ENCODE measurements at regions of chr13 and their contacts with region 1.

Region 1: DNA sequence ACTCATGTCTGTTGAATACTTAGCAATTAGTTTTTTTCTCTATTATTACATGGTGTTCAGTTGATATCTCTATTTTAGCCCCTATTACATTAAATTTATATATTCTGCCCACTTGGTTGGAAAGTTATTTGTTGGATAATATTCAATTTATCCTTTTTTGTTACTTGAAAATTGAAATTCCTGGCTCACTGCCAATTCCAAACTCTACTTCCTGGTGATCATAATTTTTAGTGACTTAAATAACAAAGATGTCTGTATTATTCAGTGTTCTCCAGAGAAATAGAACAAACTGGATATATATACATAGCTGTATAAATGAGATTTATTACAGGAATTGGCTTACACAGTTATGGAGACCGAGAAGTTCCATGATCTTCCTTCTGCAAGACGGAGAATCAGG is 93.6 kb downstream of the GPC5 start:
- DNase-seq: no peak
- ATAC-seq: no peak
- H3K4me3 ChIP-seq: no peak overlapping the region
- H3K27ac ChIP-seq: no peak overlapping the region
- H3K4me1 ChIP-seq: no peaks in the 10 kb centered on the region
- H3K27me3 ChIP-seq: no peaks in the 10 kb centered on the region
- CTCF ChIP-seq: no peak
- EP300 ChIP-seq: no peak
- POLR2A ChIP-seq: no peak
- RAD21 ChIP-seq: no peak

Region 2: GRCh38 chr13:91729859-91730258 is 237.9 kb after region 1 on chr13:
- CTCF ChIA-PET with region 1: no interaction called
- POLR2A ChIA-PET with region 1: no interaction called
- in situ Hi-C with region 1: no loop called
- intact Hi-C with region 1: loop called (anchors 5 kb)
- DNase-seq: no peak
- ATAC-seq: peak; percentile 64; the same call in 2 of the 3 replicates
- H3K4me3 ChIP-seq: no peak overlapping the region
- H3K27ac ChIP-seq: no peak overlapping the region
- H3K4me1 ChIP-seq: no peaks in the 10 kb centered on the region
- H3K27me3 ChIP-seq: no peaks in the 10 kb centered on the region
- CTCF ChIP-seq: no peak
- EP300 ChIP-seq: no peak
- POLR2A ChIP-seq: no peak
- RAD21 ChIP-seq: no peak

Measured in K562 (cell line).